BJ (cell line): ENCODE measurements at regions of chr9 and their contacts with region 1.

Region 1: DNA sequence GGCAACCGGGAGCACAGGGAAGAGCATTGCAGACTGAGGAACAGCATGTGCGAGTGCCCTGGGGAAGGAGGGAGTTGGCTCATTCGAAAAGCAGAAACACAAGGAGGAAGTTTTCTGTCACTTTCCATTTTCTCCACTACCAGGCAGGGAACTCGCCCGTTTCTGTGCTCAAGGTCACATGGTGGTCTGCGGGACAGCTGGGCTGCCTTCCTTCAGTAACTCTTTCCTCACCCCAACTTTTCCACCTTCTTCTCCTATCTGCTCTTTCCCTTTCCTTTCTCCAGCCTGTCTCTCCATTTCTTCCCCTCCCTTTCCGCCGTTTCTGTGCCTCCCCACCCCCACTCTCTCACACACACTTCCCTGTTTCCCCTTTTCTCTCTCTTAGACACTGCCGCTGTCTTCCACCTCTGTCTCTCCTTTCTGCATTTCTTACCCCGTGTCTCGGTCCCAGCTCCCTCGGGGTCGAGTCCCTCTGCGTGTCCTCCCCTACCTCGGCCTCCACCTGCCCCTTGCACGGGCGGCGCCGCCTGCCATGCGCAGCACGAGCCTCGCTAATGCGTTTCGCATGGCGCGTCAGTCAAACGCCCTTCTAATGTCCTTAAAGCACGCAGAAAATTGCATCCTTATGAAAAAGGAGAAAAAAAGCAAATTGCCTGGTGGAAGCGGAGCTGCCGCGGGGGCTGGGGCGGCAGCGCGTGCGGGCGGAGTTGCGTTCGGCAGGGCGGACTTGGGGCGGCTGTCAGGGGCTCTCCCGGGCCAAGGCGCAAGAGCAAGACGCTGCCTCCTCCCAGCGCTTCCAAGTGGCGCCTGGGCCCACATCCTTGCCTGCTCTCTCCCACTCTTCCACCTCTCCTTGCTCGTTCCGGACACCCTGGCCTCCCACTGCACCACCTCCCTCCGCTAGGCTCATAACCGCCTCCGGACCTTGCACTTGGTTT is 9.5 kb downstream of the BARX1 start:
- DNase-seq: no peak
- H3K4me3 ChIP-seq: no peak overlapping the region
- H3K27me3 ChIP-seq: peaks cover 51% of the 10 kb centered on the region
- CTCF ChIP-seq: no peak

Region 2: GRCh38 chr9:93857528-93857927 is 88.1 kb before region 1 on chr9:
- CTCF ChIA-PET with region 1: no interaction called
- POLR2A ChIA-PET with region 1: no interaction called
- DNase-seq: no peak
- H3K4me3 ChIP-seq: no peak overlapping the region
- H3K27me3 ChIP-seq: no peaks in the 10 kb centered on the region
- CTCF ChIP-seq: no peak

Region 3: DNA sequence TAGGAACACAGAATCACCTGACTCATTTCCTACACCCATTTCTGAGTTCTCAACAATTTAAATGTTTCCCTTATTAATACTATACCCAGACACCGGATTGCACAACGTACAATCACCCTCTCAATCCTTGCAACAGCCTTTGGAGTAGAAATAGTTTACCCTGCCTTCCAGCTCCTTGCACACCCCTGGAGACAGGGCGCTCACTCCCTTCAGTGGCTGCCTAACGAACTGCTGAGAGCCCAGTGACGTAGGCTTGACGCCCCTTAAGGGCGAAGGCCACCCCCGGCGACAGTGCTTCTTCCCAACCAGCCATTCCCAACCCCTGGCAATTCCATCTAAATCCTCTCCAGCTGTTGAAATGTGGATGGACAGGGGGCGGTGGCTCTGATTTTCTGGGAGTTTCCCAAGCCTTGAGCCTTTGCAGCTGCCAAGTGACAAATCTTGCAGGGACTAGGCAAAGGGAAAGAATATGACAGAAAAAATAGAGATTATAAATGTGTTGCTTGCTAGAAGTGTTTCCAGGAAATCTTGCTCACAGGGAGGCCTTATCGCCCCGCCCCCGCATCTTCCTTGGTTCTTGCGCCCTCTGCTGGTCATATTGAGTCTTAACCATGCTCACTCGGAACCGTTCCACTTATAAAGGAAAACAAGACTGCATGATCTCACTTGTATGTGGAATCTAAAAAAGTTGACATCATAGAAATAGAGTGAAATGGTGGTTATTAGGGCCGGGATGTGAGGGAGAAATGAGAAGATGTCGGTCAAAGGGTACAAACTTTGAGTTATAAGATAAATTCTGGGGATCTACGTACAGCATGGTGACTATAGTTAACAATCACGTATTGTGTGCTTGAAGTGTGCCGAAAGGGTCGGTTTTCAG is 17.1 kb after region 1 on chr9:
- CTCF ChIA-PET with region 1: interaction called, 17 read pairs
- POLR2A ChIA-PET with region 1: no interaction called
- DNase-seq: peak; percentile 17
- H3K4me3 ChIP-seq: no peak overlapping the region
- H3K27me3 ChIP-seq: peaks cover 31% of the 10 kb centered on the region
- CTCF ChIP-seq: peak; percentile 85

Region 4: DNA sequence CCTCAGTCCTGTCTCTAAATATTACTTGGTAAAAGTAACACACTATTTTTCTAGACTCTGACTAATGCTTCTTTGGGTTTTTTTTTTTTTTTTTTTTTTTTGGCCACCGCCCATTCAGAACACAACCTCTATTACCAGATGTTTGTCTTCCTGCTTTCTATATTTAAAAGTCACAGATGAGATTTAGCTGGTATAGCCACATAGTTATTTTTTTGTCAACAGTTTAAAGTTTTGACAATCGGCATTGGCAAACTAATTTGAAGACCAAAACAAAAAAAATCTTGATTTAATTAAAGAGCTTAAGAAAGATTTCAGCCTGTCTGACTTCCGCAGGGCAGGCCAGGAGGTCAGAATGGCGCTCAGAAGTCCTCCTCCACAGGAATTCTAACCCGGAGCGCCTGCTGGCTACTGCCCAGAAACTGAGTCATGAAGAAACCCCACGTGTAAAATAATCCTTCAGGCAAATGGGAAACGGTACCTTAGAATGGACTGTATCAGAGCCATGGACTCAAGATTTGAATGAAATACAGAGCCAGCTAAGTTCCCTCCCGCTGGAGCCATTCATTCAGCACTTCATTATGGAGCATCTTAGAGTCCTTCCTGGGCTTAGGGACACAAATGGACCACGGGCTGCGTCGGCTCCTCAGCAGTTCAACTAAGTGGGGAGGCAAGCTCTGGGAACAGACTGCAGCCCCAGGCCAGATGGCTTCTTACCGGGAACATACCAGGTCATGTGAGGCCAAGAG is 194.2 kb after region 1 on chr9:
- CTCF ChIA-PET with region 1: no interaction called
- POLR2A ChIA-PET with region 1: no interaction called
- DNase-seq: peak; percentile 95
- H3K4me3 ChIP-seq: no peak overlapping the region
- H3K27me3 ChIP-seq: no peaks in the 10 kb centered on the region
- CTCF ChIP-seq: no peak